Endothelial cell of umbilical vein (primary cell): ENCODE measurements at regions of chr5 and their contacts with region 1.

Region 1: GRCh38 chr5:150317048-150318003 is 14.6 kb upstream of the ARSI start:
- DNase-seq: peak; percentile 81
- H3K4me3 ChIP-seq: no peak overlapping the region
- H3K27ac ChIP-seq: peak overlapping the region; percentile 78
- H3K4me1 ChIP-seq: peaks cover 24% of the 10 kb centered on the region
- H3K27me3 ChIP-seq: no peaks in the 10 kb centered on the region
- CTCF ChIP-seq: no peak
- POLR2A ChIP-seq: no peak

Region 2: DNA sequence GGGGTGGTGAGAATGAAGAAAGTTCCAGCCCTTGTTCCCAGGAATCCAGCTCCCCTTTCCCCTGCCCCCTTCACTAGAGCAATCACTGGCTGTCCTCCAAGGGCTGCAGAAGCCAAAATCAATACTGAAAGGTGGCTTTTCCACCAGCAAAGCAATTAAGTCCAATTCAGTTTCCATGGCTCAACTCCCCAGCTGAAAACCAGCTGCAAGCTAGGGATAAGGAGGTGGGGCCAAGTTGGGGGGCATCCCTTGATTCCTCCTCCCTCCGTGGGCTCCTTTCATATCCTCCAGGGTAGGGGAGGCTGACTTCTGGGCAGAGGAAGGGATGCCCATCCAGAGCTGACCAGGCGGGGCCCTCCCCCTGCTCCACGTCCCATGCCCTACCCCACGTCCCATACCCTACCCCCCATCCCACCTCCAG is 50.4 kb before region 1 on chr5:
- CTCF ChIA-PET with region 1: no interaction called
- POLR2A ChIA-PET with region 1: interaction called, 4 read pairs
- dilution Hi-C with region 1: no loop called
- intact Hi-C with region 1: loop called (anchors 5 kb)
- DNase-seq: no peak
- H3K4me3 ChIP-seq: no peak overlapping the region
- H3K27ac ChIP-seq: no peak overlapping the region
- H3K4me1 ChIP-seq: no peaks in the 10 kb centered on the region
- H3K27me3 ChIP-seq: peaks cover 0 to 3% of the 10 kb centered on the region in 2 experiments
- CTCF ChIP-seq: no peak
- POLR2A ChIP-seq: no peak

Region 3: DNA sequence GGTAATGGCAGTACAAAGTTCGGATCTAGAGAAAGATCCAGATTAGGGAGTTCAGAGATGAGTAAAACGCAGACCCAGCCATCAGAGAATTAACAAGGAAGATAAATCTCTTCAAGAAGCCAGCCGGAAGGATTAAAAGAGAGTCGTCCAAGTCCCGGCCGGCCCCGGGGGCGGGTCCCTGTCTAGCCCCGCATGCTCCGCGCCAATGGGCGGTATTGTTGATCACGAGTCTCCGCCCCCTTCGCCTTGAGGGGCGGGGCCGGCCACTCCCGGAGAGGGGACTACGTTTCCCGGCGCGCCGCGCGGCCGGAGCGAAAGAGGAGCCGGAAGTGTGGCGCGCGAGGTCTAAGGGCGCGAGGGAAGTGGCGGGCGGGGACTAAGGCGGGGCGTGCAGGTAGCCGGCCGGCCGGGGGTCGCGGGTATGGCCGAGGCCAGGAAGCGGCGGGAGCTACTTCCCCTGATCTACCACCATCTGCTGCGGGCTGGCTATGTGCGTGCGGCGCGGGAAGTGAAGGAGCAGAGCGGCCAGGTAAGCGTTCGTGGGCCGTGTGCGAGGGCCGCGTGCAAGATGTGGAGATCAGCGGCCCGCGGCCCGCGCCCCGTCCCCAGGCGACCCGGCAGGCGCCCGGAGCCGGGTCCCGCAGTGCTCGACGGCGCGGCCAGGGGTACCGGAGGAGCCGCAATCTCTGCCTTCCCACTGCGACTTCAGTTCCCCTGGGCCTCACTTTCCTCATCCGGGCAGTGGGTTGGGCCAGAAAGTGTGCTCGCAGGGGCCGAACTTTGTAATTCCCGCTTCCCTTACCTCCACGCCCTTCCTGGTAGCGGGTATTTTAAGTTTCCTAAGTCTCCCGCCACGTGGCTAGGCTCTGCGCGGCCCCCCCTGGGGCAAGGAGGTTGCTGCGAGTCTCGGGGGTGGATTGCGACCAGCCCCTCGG is 40.3 kb after region 1 on chr5 and contains the start of gene TCOF1:
- CTCF ChIA-PET with region 1: no interaction called
- POLR2A ChIA-PET with region 1: no interaction called
- dilution Hi-C with region 1: no loop called
- intact Hi-C with region 1: loop called (anchors 2 kb)
- DNase-seq: peak; percentile 95
- H3K4me3 ChIP-seq: peak within 1 kb of the TSS; percentile 62 to 89 (median 64)
- H3K27ac ChIP-seq: peak within 1 kb of the TSS; percentile 13
- H3K4me1 ChIP-seq: peaks cover 3% of the 10 kb centered on the region
- H3K27me3 ChIP-seq: no peaks in the 10 kb centered on the region
- CTCF ChIP-seq: no peak
- POLR2A ChIP-seq: peak; percentile 48
- total RNA-seq, gene TCOF1: 47.2 and 52.0 TPM in 2 replicates

Region 4: DNA sequence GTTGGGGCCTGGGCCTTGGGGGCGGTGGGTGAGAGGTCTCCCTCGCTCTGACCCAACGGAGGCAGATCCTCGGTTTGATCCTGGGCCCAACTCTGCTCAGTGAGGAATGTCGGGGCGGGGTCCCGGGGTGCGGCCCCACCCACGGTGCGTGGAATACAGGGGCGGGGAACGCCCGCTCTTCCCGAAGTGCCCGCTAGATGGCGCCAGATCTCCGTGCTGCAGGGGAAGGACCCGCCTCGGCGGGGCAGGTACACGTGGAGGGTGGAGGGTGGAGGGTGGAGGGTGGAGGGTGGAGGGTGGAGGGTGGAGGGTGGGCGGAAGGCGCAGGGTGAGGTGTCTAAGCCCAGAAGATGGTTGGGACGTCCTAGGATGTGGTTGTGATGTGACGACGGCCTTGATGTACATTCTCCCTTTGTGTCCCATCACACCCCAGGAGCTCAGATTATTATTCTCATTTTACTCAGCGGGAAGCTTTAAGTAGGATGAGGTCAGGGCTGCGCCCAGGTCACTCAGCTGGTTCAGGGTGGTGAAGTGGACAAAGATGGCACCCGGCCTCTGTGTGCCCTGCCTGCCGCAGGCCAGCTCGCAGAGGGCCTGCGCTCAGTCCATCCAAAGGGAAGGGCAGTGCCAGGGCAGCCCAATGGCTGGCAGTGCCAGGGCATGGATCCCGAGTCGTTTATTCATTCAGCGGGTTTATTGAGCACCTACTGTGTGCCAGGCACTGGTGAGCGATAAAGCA is 141.7 kb after region 1 on chr5:
- CTCF ChIA-PET with region 1: no interaction called
- POLR2A ChIA-PET with region 1: no interaction called
- dilution Hi-C with region 1: no loop called
- intact Hi-C with region 1: no loop called
- DNase-seq: peak; percentile 33
- H3K4me3 ChIP-seq: peak overlapping the region in 1 of 3 experiments; percentile 17
- H3K27ac ChIP-seq: no peak overlapping the region
- H3K4me1 ChIP-seq: peaks cover 4% of the 10 kb centered on the region
- H3K27me3 ChIP-seq: no peaks in the 10 kb centered on the region
- CTCF ChIP-seq: peak; percentile 57 to 88
- POLR2A ChIP-seq: no peak